ENCODE measurements at regions of chr2 and their contacts with region 1.

Region 1: DNA sequence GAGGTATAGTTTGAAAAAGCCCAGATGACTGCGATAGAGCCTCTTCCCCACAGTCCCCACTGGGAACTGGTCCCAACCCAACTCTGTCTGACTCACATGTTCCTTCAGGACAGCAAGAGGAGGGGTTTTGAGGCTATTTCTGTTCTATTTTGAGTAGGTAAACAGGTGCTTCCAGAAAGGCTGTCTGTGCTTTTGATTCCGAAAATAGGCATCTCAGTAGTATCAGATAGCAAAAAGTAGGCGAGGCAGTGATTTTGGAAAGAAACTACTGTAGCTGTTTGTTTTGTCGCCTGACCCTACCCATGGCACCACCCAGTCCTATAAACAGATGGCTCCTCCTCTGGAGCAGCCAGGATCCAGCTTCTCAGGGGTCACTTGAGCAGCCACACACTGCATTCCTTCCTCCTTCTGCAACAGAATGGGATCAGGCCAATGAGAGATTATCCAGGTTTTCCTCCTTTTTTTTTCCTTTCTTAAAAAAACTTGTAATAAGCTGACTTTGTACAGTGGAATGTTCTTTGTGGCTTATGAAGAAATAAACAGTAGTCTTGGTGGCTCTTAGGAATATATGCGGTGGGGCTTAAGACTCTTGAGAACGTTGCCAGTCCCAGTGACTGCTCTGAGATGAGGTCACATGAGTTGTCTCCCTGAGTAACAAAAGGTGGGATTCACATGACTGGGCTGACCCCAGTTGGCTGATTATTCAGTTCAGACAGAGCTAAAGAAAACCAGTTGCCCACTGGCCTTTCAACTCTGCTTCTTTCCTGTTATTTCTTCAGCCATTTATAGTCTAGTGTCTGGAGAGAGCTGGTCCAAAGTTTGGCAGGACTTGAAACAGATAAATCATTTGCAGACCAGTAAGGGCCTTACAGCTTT is 98.6 kb downstream of the KCNS3 start:
- DNase-seq: peak; percentile 71 to 96
- H3K4me3 ChIP-seq: peak overlapping the region; percentile 4; the same call in 1 of the 2 replicates
- H3K27ac ChIP-seq: peak overlapping the region; percentile 66
- H3K4me1 ChIP-seq: peaks cover 24% of the 10 kb centered on the region
- H3K27me3 ChIP-seq: no peaks in the 10 kb centered on the region
- CTCF ChIP-seq: no peak

Region 2: DNA sequence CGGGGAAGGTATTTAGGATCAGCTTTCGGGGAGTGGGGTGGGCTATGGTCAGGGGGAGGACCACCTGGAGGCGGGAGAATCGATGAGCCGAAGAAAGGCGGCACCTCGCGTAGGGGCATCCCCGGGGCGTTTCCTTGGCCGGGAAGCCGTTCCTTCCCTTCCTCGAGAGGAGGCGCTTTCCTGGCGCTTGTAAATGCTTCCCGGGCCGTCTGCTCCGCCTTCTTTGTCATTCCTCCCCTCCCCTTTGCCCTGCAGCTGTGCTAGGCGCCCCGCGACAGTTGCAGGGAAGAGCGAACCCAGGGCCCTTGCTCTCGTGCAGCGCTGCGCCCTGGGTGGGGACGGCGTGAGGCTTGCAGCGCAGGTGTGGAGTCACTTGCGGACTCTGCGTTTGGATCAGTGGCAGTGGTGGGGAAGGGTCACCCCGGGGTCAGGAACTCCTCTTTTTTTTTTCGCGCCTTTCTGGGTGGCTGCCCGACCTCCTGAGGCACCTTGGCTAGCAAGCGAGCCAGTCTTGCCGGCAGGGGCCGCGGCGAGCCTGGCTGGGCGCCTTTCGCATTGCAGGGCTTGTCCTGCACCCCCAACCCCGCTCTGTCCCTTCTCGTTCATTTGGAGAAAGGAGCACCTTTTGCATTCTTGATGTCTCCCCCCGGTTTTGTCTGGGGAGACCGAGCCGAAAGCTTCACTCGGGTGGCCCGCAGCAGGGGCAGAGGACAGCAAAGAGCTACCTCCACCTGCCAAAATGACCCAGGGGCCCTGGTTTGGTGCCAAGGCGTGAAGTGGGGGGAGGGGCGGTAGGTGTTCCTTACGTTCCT is 97.8 kb before region 1 on chr2:
- CTCF ChIA-PET with region 1: no interaction called
- POLR2A ChIA-PET with region 1: interaction called, 3 read pairs
- intact Hi-C with region 1: loop called (anchors 1 kb)
- DNase-seq: peak; percentile 87 to 88
- H3K4me3 ChIP-seq: peak overlapping the region; percentile 99
- H3K27ac ChIP-seq: peak overlapping the region; percentile 25; the same call in 1 of the 2 replicates
- H3K4me1 ChIP-seq: peaks cover 10% of the 10 kb centered on the region
- H3K27me3 ChIP-seq: peaks cover 21% of the 10 kb centered on the region; the same call in 1 of the 2 replicates
- CTCF ChIP-seq: peak; percentile 52; the same call in 1 of the 2 replicates

Region 3: GRCh38 chr2:17892770-17893534 is 84.2 kb before region 1 on chr2:
- CTCF ChIA-PET with region 1: no interaction called
- POLR2A ChIA-PET with region 1: no interaction called
- intact Hi-C with region 1: loop called (anchors 5 kb)
- DNase-seq: peak; percentile 77 to 84
- H3K4me3 ChIP-seq: peak overlapping the region; percentile 1; the same call in 1 of the 2 replicates
- H3K27ac ChIP-seq: peak overlapping the region; percentile 66
- H3K4me1 ChIP-seq: peaks cover 25% of the 10 kb centered on the region
- H3K27me3 ChIP-seq: no peaks in the 10 kb centered on the region
- CTCF ChIP-seq: no peak

Region 4: GRCh38 chr2:18047850-18048249 is 70.7 kb after region 1 on chr2:
- CTCF ChIA-PET with region 1: no interaction called
- POLR2A ChIA-PET with region 1: no interaction called
- intact Hi-C with region 1: loop called (anchors 1 kb)
- DNase-seq: peak; percentile 79 to 91
- H3K4me3 ChIP-seq: no peak overlapping the region; the same call in 1 of the 2 replicates
- H3K27ac ChIP-seq: peak overlapping the region; percentile 79
- H3K4me1 ChIP-seq: peaks cover 32% of the 10 kb centered on the region
- H3K27me3 ChIP-seq: no peaks in the 10 kb centered on the region
- CTCF ChIP-seq: no peak

Region 5: DNA sequence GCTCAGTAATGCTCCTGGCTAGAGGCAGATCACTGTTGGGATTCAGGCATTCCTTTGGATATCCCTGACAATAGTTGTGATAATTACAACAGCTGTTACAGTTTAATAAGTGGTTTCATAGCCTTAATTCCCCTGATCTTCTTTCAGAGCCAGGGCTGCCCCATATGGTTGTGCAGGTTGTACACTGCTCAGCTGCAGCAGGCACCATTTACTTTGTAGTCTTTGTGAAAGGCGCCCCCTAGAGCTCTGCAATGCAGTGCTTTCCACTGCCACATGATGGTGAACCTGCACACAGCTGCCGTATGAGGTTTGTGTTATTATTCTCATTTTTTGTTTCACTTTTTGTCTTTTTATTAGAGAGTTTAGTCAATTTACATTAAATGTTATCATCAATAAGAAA is 140.5 kb after region 1 on chr2:
- CTCF ChIA-PET with region 1: no interaction called
- POLR2A ChIA-PET with region 1: no interaction called
- intact Hi-C with region 1: loop called (anchors 5 kb)
- DNase-seq: peak in 1 of 2 experiments; percentile 47
- H3K4me3 ChIP-seq: no peak overlapping the region
- H3K27ac ChIP-seq: no peak overlapping the region
- H3K4me1 ChIP-seq: no peaks in the 10 kb centered on the region
- H3K27me3 ChIP-seq: no peaks in the 10 kb centered on the region
- CTCF ChIP-seq: peak; percentile 77